ENCODE measurements at regions of chr12 and their contacts with region 1.

Region 1: DNA sequence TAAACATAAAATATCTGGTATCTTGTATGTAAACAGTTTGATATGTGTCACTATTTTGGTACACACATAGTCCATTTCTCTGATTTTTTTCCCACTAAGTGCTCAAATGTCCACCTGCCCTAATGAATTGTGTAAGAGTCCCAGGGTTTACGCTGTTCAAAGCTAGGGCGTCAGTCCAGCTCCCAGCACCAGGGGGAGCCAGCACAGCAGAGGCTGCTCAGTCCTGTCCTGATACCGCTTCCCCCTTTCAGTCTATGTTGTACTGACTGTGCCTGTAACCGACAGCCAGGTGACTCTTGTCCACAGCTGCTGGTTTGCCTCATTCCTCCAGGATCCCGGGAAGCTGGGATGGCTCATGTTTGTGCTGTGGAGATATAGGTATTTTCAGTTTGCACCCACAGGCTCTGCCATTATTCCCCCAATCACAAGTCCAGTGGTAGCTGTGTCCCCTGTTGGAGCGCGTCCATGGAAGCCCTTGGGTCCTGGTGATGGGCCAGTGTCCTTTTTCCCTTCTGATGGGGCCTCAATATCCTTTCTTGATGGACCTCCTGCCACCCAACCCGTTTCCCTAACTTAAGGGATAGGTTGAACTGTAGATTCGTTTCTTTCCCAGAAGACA is 242.0 kb downstream of the NEDD1 start:
- DNase-seq: peak; percentile 87
- H3K4me3 Mint-ChIP-seq: no peak overlapping the region
- H3K27ac Mint-ChIP-seq: no peak overlapping the region
- H3K4me1 Mint-ChIP-seq: no peaks in the 10 kb centered on the region
- H3K27me3 Mint-ChIP-seq: peaks cover 22% of the 10 kb centered on the region
- CTCF ChIP-seq: peak; percentile 81

Region 2: DNA sequence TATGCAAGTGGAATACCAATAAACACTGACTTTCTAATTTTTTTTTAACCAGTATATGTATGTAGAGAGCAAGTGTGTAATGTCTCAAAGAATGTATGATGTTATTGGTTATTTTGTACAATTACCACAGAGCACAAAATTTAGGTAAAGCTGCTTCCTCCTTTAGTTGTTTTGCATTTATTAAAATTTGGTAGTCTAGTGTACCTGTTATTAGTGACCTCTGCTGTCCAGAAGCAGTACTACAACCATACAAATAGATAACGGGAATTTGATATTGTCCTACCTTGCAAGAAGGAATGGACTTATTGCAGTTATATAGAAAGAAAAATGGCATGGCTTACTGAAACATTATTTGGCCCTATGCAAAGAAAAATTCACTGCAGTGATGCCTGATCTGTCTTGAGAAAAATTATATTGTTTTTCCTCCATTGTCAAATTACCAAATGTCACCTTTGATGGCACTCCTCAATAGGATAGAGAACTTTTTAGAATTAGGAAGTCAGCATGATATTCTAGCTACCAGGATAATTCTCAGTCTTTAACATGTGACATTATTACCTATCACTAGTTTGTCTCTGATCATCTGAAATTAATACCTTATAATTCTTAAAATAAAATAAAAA is 159.6 kb after region 1 on chr12:
- CTCF ChIA-PET with region 1: interaction called, 4 read pairs
- intact Hi-C with region 1: loop called (anchors 2 kb)
- DNase-seq: peak; percentile 35
- H3K4me3 Mint-ChIP-seq: no peak overlapping the region
- H3K27ac Mint-ChIP-seq: no peak overlapping the region
- H3K4me1 Mint-ChIP-seq: peaks cover 8% of the 10 kb centered on the region
- H3K27me3 Mint-ChIP-seq: peaks cover 17% of the 10 kb centered on the region
- CTCF ChIP-seq: peak; percentile 64

Region 3: DNA sequence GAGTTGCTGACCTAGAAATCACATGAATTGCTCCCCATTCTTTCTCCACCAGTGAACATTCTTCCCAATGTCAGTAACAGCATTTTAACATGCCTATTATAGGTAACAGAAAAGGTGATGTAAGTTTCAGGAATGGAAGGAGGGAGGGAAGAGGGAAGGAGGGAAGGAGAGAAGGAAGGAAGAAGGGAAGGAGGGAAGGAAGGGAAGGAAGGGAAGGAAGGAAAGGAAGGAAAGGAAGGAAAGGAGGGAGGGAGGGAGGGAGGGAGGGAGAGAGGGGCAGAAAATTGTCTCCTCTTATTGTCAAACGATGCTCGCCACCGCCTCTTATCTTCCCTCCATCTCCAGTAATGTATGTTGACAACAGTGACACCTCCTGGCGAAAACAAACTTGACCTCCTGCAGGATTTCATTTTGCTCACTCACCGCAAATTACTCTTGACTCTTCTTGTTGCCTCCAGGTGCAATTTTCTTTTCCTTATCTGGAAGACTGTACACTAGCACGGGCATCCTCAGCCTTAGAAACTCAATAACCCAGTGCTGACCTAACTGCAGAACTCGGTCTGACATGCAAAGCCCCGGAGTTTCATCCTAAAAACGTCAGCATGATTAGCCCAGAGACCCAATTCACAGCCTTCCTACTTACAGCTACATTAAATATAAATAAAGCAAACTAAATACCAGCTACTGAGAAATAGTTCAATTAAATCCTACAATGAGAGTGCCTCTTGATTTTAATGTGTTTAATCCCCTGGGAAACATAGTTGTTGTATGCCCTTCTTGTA is 853.9 kb after region 1 on chr12:
- CTCF ChIA-PET with region 1: no interaction called
- intact Hi-C with region 1: loop called (anchors 1 kb)
- DNase-seq: peak; percentile 72
- H3K4me3 Mint-ChIP-seq: no peak overlapping the region
- H3K27ac Mint-ChIP-seq: no peak overlapping the region
- H3K4me1 Mint-ChIP-seq: peaks cover 9% of the 10 kb centered on the region
- H3K27me3 Mint-ChIP-seq: no peaks in the 10 kb centered on the region
- CTCF ChIP-seq: peak; percentile 61

Measured in Calu3 (cell line).